ENCODE measurements at regions of chr19 and their contacts with region 1.

Region 1: GRCh38 chr19:58346961-58347931 is 6.0 kb downstream of the A1BG start:
- DNase-seq: peak in 1 of 2 experiments; percentile 81
- H3K4me3 ChIP-seq: peak overlapping the region; percentile 78 to 88 (median 82)
- H3K27ac ChIP-seq: no peak overlapping the region
- H3K4me1 ChIP-seq: no peaks in the 10 kb centered on the region; a peak in 1 of 7 replicates
- H3K27me3 ChIP-seq: 0 out of 7 replicates have a peak, but pooled peaks cover 0 to 3% (median 0%) of the 10 kb centered on the region in 4 experiments
- CTCF ChIP-seq: no peak
- EP300 ChIP-seq: no peak
- POLR2A ChIP-seq: 0 out of 3 replicates have a peak, but pooled peaks of 1 of the 2 experiments have one; percentile 35
- RAD21 ChIP-seq: no peak

Region 2: GRCh38 chr19:58326914-58327726 is 20.1 kb before region 1 on chr19 and contains the start of gene ZSCAN22:
- CTCF ChIA-PET with region 1: interaction called, 14 read pairs
- POLR2A ChIA-PET with region 1: interaction called, 6 read pairs
- DNase-seq: peak; percentile 72 to 94
- H3K4me3 ChIP-seq: peak within 1 kb of the TSS; percentile 72 to 98 (median 88)
- H3K27ac ChIP-seq: peak within 1 kb of the TSS; percentile 65; the same call in 1 of the 2 replicates
- H3K4me1 ChIP-seq: no peaks in the 10 kb centered on the region
- H3K27me3 ChIP-seq: 0 out of 7 replicates have a peak, but pooled peaks cover 0 to 3% (median 0%) of the 10 kb centered on the region in 4 experiments
- CTCF ChIP-seq: no peak
- EP300 ChIP-seq: no peak
- POLR2A ChIP-seq: no peak; a peak in 1 of 3 replicates
- RAD21 ChIP-seq: no peak
- total RNA-seq, gene ZSCAN22: 3.1 and 3.2 TPM in 2 replicates

Region 3: GRCh38 chr19:58408152-58409009 is 61.1 kb after region 1 on chr19 and contains the start of gene ZNF584:
- CTCF ChIA-PET with region 1: no interaction called
- POLR2A ChIA-PET with region 1: no interaction called
- DNase-seq: peak; percentile 74 to 93
- H3K4me3 ChIP-seq: peak within 1 kb of the TSS; percentile 76 to 85 (median 80)
- H3K27ac ChIP-seq: peak within 1 kb of the TSS; percentile 54; the same call in 1 of the 2 replicates
- H3K4me1 ChIP-seq: peaks cover 0 to 18% (median 9%) of the 10 kb centered on the region in 4 experiments; a peak in 5 of 7 replicates
- H3K27me3 ChIP-seq: peaks cover 0 to 7% (median 1%) of the 10 kb centered on the region in 4 experiments; a peak in 2 of 7 replicates
- CTCF ChIP-seq: no peak
- EP300 ChIP-seq: no peak
- POLR2A ChIP-seq: peak; percentile 85 to 90
- RAD21 ChIP-seq: 0 out of 4 replicates have a peak, but pooled peaks of 1 of the 2 experiments have one; percentile 2
- total RNA-seq, gene ZNF584: 4.5 and 5.2 TPM in 2 replicates

Measured in H1 (cell line).